ENCODE measurements at regions of chr11 and their contacts with region 1.

Region 1: DNA sequence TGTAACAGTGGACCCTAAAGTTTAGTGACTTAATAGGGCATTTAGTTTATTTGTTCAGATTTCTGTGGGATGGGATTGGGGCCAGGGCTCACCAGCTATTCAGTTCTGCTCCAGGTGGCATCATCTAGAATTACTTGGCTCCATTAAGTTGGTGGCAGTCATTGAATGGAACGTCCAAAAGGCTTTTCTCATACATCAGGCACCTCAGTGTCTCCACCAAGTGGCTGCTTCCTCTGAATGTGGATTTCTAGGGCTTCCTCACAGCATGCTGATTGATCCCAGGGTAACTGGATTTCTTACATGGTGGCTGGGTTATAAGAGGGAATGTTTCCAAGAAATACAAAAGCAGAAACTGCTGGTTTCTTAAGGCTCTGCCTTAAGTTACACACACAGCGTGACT is 34.7 kb downstream of the USP47 start:
- DNase-seq: peak; percentile 5
- ATAC-seq: no peak
- H3K4me3 ChIP-seq: no peak overlapping the region
- H3K27ac ChIP-seq: no peak overlapping the region
- H3K4me1 ChIP-seq: peaks cover 8% of the 10 kb centered on the region; the same call in 1 of the 2 replicates
- H3K27me3 ChIP-seq: no peaks in the 10 kb centered on the region
- CTCF ChIP-seq: 0 out of 2 replicates have a peak, but pooled peaks have one; percentile 7
- EP300 ChIP-seq: no peak
- POLR2A ChIP-seq: no peak
- RAD21 ChIP-seq: no peak

Region 2: DNA sequence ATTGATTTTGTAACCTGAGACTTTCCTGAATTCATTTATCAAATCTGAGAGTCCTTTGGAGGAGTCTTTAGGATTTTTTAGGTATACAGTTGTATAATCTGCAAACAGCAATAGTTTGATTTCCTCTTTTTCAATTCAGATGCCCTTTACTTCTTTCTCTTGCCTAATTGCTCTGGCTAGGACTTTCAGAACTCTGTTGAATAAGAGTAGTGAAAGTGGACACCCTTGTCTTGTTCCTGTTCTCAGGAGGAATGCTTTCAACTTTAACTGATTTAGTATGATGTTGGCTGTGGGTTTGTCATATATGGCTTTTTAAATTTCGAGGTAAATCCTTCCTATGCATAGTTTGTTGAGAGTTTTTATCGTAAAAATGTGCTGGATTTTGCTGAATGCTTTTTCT is 750.8 kb before region 1 on chr11:
- CTCF ChIA-PET with region 1: no interaction called
- POLR2A ChIA-PET with region 1: no interaction called
- in situ Hi-C with region 1: no loop called
- intact Hi-C with region 1: no loop called
- DNase-seq: no peak
- ATAC-seq: no peak
- H3K4me3 ChIP-seq: no peak overlapping the region
- H3K27ac ChIP-seq: no peak overlapping the region
- H3K4me1 ChIP-seq: no peaks in the 10 kb centered on the region
- H3K27me3 ChIP-seq: no peaks in the 10 kb centered on the region; a peak in 1 of 5 replicates
- CTCF ChIP-seq: no peak
- EP300 ChIP-seq: no peak
- POLR2A ChIP-seq: no peak
- RAD21 ChIP-seq: no peak

Region 3: DNA sequence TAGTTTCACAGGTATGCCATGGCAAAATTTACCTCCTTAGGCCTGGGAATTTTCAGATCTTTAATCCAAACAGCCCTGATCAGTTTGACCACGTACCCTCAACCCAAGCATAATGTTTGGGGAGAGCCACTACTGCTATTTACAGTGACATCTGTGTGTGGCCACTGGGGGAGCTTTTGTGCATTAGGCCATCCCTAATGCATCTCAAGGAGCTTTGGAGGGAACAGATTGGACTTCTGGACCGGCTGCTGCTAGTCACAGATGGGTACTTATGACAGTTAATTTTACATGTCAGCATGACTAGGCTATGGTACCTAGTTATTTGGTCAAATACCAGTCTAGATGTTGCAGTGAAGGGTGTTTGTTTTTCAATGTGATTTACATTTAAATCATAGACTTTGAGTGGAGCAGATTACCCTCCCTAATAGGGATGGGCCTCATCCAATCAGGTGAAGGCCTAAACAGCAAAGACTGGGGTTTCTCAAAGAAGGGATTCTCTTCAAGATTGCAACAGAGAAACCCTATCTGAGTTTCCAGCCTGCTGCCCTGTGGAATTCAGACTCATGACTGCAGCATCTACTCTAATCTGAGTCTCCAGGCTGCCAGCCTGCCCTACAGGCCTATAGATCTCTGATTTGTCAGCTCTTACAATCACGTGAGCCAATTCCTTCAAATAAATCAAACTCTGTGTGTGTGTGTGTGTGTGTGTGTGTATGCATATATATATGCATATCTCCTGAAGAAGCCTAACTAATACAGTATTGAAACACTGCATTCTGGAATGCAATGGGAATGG is 216.7 kb before region 1 on chr11:
- CTCF ChIA-PET with region 1: no interaction called
- POLR2A ChIA-PET with region 1: no interaction called
- in situ Hi-C with region 1: no loop called
- intact Hi-C with region 1: no loop called
- DNase-seq: no peak
- ATAC-seq: peak; percentile 51; the same call in 1 of the 3 replicates
- H3K4me3 ChIP-seq: no peak overlapping the region
- H3K27ac ChIP-seq: no peak overlapping the region
- H3K4me1 ChIP-seq: no peaks in the 10 kb centered on the region
- H3K27me3 ChIP-seq: peaks cover 1 to 13% of the 10 kb centered on the region in 2 experiments; a peak in 2 of 5 replicates
- CTCF ChIP-seq: no peak
- EP300 ChIP-seq: no peak
- POLR2A ChIP-seq: no peak
- RAD21 ChIP-seq: no peak

Region 4: GRCh38 chr11:11670574-11670973 is 205.9 kb before region 1 on chr11:
- CTCF ChIA-PET with region 1: no interaction called
- POLR2A ChIA-PET with region 1: no interaction called
- in situ Hi-C with region 1: no loop called
- intact Hi-C with region 1: no loop called
- DNase-seq: no peak
- ATAC-seq: no peak
- H3K4me3 ChIP-seq: no peak overlapping the region
- H3K27ac ChIP-seq: no peak overlapping the region
- H3K4me1 ChIP-seq: no peaks in the 10 kb centered on the region
- H3K27me3 ChIP-seq: peaks cover 0 to 39% of the 10 kb centered on the region in 2 experiments; a peak in 3 of 5 replicates
- CTCF ChIP-seq: no peak
- EP300 ChIP-seq: no peak
- POLR2A ChIP-seq: no peak
- RAD21 ChIP-seq: no peak

Region 5: DNA sequence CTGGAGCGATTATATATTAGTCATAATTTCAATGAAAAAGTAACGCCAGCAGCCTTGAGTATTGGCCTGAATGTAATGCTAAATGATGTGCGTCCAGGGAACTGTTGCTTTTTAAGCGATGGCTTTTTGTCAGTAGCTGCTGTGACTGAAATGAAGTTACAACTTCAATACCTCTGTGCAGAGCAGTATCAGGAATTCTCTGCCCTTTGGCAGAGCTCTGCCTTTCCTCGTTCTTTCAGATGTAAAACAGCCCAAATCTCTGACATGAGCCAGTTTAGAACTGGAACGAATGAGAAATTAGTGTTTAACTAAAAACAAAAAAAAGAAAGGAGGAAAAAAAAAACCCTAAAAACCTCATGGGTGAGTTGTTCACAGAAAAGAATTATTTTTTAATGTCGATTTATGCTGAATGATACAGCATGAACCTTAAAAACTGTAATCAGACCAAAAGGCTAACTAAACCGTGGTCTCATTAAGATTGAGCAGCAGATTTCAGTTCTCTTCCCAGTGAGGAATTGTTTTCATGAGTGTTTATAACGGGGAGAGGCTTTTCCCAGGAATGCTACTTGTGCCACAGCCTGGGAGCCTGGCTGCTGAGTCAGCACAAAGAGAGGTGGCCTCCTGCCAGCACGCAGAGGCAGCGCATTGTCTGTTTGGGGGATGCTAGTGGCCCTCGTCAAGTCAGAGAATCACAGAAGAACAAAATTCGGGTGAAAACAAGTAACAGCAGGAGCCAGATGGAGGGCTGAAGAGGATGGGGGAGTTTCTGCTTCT is 986.4 kb after region 1 on chr11:
- CTCF ChIA-PET with region 1: no interaction called
- POLR2A ChIA-PET with region 1: no interaction called
- in situ Hi-C with region 1: no loop called
- intact Hi-C with region 1: loop called (anchors 5 kb)
- DNase-seq: no peak
- ATAC-seq: no peak
- H3K4me3 ChIP-seq: no peak overlapping the region
- H3K27ac ChIP-seq: no peak overlapping the region
- H3K4me1 ChIP-seq: peaks cover 9% of the 10 kb centered on the region; the same call in 1 of the 2 replicates
- H3K27me3 ChIP-seq: no peaks in the 10 kb centered on the region
- CTCF ChIP-seq: no peak
- EP300 ChIP-seq: no peak
- POLR2A ChIP-seq: no peak
- RAD21 ChIP-seq: no peak

Measured in HepG2 (cell line).